Dorsolateral prefrontal cortex (tissue), 120 donors: ENCODE measurements at regions of chr19 and their contacts with region 1.

Region 1: DNA sequence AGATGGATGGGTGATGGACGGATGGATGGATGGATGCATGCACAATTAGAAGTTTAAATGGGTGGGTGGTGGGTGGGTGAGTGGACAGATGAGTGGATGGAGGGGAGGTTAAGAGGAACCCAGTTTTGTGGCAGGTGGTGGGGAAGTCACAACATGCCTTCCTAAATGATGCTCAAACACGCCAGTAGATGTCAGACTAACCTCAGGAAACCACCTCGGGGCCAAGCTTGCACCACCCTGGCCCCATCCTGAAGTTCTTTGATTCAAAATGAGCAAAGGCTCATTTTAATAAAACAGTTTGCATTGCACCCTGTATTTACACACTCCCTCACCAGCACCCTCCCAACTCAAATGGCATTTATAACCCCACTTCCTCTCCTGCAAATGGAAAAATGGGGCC is 91.4 kb upstream of the CACNA1A start:
- DNase-seq: peak in 8 of 10 donors; percentile 40 to 67 (median 57)
- H3K4me3 ChIP-seq: no peak overlapping the region
- H3K27ac ChIP-seq: no peak overlapping the region
- H3K27me3 ChIP-seq: peaks cover 0 to 3% (median 0%) of the 10 kb centered on the region in 45 donors
- CTCF ChIP-seq: peak in 55 of 56 donors; percentile 44 to 87 (median 72)

Region 2: DNA sequence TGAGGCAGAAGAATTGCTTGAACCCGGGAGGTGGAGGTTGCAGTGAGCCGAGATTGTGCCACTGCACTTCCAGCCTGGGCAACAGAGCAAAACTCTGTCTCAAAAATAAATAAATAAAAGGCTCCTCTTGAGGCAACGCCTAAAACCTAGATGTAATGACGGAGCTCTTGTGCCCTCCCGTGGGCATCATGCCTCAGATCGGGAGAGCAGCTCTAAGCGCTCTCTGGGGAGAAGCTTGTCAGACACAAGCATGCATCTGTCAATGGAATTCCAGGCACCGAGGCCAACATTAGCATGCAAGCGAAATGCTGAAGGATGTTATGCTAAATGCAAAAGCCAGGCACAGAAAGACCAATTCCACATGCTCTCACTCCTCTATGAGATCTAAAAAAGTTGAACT is 121.1 kb after region 1 on chr19:
- intact Hi-C with region 1: loop called (anchors 1 to 5 kb)
- DNase-seq: peak; percentile 27 to 80 (median 74)
- H3K4me3 ChIP-seq: no peak overlapping the region
- H3K27ac ChIP-seq: no peak overlapping the region
- H3K27me3 ChIP-seq: no peaks in the 10 kb centered on the region
- CTCF ChIP-seq: peak in 54 of 56 donors; percentile 27 to 75 (median 55)